A673 (cell line): ENCODE measurements at regions of chr11 and their contacts with region 1.

Region 1: GRCh38 chr11:74929431-74930363 is 19.2 kb downstream of the XRRA1 start:
- DNase-seq: peak; percentile 94
- H3K4me3 ChIP-seq: no peak overlapping the region
- H3K27ac ChIP-seq: no peak overlapping the region
- H3K4me1 ChIP-seq: peaks cover 7% of the 10 kb centered on the region
- H3K27me3 ChIP-seq: no peaks in the 10 kb centered on the region
- CTCF ChIP-seq: peak; percentile 98

Region 2: GRCh38 chr11:74710281-74710938 is 219.3 kb before region 1 on chr11:
- CTCF ChIA-PET with region 1: no interaction called
- POLR2A ChIA-PET with region 1: no interaction called
- intact Hi-C with region 1: no loop called
- DNase-seq: peak; percentile 24
- H3K4me3 ChIP-seq: no peak overlapping the region
- H3K27ac ChIP-seq: no peak overlapping the region
- H3K4me1 ChIP-seq: peaks cover 8% of the 10 kb centered on the region
- H3K27me3 ChIP-seq: no peaks in the 10 kb centered on the region
- CTCF ChIP-seq: no peak

Region 3: GRCh38 chr11:75031771-75032549 is 102.3 kb after region 1 on chr11:
- CTCF ChIA-PET with region 1: no interaction called
- POLR2A ChIA-PET with region 1: no interaction called
- intact Hi-C with region 1: loop called (anchors 1 kb)
- DNase-seq: peak; percentile 74
- H3K4me3 ChIP-seq: no peak overlapping the region
- H3K27ac ChIP-seq: no peak overlapping the region
- H3K4me1 ChIP-seq: no peaks in the 10 kb centered on the region
- H3K27me3 ChIP-seq: no peaks in the 10 kb centered on the region
- CTCF ChIP-seq: peak; percentile 86

Region 4: GRCh38 chr11:75204685-75205563 is 275.2 kb after region 1 on chr11:
- CTCF ChIA-PET with region 1: interaction called, 14 read pairs
- POLR2A ChIA-PET with region 1: no interaction called
- intact Hi-C with region 1: no loop called
- DNase-seq: peak; percentile 87
- H3K4me3 ChIP-seq: no peak overlapping the region
- H3K27ac ChIP-seq: no peak overlapping the region
- H3K4me1 ChIP-seq: no peaks in the 10 kb centered on the region
- H3K27me3 ChIP-seq: peaks cover 24% of the 10 kb centered on the region
- CTCF ChIP-seq: peak; percentile 99

Region 5: GRCh38 chr11:75760710-75761493 is 831.2 kb after region 1 on chr11:
- CTCF ChIA-PET with region 1: no interaction called
- POLR2A ChIA-PET with region 1: no interaction called
- intact Hi-C with region 1: no loop called
- DNase-seq: no peak
- H3K4me3 ChIP-seq: no peak overlapping the region
- H3K27ac ChIP-seq: no peak overlapping the region
- H3K4me1 ChIP-seq: peaks cover 4% of the 10 kb centered on the region
- H3K27me3 ChIP-seq: no peaks in the 10 kb centered on the region
- CTCF ChIP-seq: no peak